ENCODE measurements at regions of chr7 and their contacts with region 1.

Region 1: DNA sequence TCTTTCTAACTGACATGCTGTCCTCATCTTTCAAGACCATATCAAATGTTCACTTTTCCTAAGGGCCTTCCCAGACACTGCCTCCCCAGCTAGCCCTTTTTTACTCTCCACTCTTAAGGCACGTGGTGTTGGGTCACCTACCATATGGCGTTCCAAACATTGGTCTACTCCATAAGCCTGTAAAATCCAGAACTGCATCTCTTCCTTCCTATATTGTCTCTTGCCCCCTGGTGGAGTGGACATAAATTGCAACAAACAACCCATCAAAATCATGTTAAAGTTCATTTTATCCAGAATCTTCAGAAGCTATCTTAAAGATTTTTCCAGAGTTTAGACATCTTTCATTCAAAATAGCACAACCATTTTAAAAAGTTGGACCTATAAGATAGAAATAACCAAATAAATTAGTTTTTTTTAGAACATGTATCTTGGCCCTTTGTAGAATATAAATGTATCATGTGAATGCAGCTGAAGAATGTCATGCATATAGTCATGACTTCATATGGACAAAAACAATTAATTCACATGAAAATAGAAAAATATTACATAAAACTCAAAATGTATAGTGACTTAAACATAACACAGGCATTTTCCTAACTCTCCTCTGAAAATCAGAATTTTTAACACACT is 180.6 kb upstream of the CHRM2 start:
- DNase-seq: peak; percentile 46
- H3K4me3 Mint-ChIP-seq: no peak overlapping the region
- H3K27ac Mint-ChIP-seq: no peak overlapping the region
- H3K4me1 Mint-ChIP-seq: peaks cover 5% of the 10 kb centered on the region
- H3K27me3 Mint-ChIP-seq: peaks cover 62% of the 10 kb centered on the region
- CTCF ChIP-seq: peak; percentile 67

Region 2: DNA sequence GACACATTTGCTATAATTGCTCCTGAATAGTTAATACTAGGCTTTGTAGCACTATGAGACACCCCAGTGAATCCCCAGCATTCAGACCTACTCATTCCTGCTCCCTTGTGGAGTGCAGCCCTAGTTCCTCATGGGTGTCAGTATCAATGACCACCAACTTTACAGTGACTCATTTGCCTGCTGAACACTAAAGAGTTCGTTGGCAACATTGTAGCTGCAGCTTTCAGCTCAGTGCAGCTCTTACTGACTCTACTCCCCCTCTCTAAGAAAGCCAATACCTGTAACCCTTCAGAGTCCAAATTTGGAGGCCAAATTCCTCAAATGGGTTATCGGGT is 583.6 kb before region 1 on chr7:
- CTCF ChIA-PET with region 1: no interaction called
- POLR2A ChIA-PET with region 1: no interaction called
- intact Hi-C with region 1: no loop called
- DNase-seq: no peak
- H3K4me3 Mint-ChIP-seq: no peak overlapping the region
- H3K27ac Mint-ChIP-seq: no peak overlapping the region
- H3K4me1 Mint-ChIP-seq: no peaks in the 10 kb centered on the region
- H3K27me3 Mint-ChIP-seq: no peaks in the 10 kb centered on the region
- CTCF ChIP-seq: no peak

Region 3: GRCh38 chr7:136114966-136115762 is 572.6 kb before region 1 on chr7:
- CTCF ChIA-PET with region 1: interaction called, 3 read pairs
- POLR2A ChIA-PET with region 1: no interaction called
- intact Hi-C with region 1: loop called (anchors 2 kb)
- DNase-seq: peak; percentile 51
- H3K4me3 Mint-ChIP-seq: no peak overlapping the region
- H3K27ac Mint-ChIP-seq: no peak overlapping the region
- H3K4me1 Mint-ChIP-seq: no peaks in the 10 kb centered on the region
- H3K27me3 Mint-ChIP-seq: peaks cover 40% of the 10 kb centered on the region
- CTCF ChIP-seq: peak; percentile 65

Region 4: GRCh38 chr7:136405931-136406777 is 281.7 kb before region 1 on chr7:
- CTCF ChIA-PET with region 1: interaction called, 21 read pairs
- POLR2A ChIA-PET with region 1: no interaction called
- intact Hi-C with region 1: no loop called
- DNase-seq: peak; percentile 61
- H3K4me3 Mint-ChIP-seq: no peak overlapping the region
- H3K27ac Mint-ChIP-seq: no peak overlapping the region
- H3K4me1 Mint-ChIP-seq: no peaks in the 10 kb centered on the region
- H3K27me3 Mint-ChIP-seq: peaks cover 62% of the 10 kb centered on the region
- CTCF ChIP-seq: peak; percentile 72

Region 5: DNA sequence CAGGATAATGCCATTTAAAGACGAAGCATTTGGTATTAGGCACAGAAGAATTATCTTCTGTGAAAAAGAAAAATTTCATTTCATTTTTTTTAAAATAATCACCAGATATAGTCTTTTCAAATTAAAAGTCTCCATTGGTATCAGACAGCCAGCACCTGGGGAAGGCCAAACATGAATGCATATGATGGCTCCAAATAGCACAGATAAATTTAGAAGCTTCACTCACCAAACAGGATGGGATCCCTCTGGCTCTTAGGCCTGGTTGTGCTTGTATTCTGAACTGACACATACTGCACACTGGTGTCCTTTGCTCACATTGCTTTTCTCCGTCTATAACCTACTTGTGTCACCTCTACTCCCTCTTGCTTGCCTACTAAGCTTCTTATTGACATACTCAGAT is 11.2 kb after region 1 on chr7:
- CTCF ChIA-PET with region 1: interaction called, 12 read pairs
- POLR2A ChIA-PET with region 1: no interaction called
- intact Hi-C with region 1: no loop called
- DNase-seq: no peak
- H3K4me3 Mint-ChIP-seq: no peak overlapping the region
- H3K27ac Mint-ChIP-seq: no peak overlapping the region
- H3K4me1 Mint-ChIP-seq: no peaks in the 10 kb centered on the region
- H3K27me3 Mint-ChIP-seq: peaks cover 33% of the 10 kb centered on the region
- CTCF ChIP-seq: no peak

Region 6: DNA sequence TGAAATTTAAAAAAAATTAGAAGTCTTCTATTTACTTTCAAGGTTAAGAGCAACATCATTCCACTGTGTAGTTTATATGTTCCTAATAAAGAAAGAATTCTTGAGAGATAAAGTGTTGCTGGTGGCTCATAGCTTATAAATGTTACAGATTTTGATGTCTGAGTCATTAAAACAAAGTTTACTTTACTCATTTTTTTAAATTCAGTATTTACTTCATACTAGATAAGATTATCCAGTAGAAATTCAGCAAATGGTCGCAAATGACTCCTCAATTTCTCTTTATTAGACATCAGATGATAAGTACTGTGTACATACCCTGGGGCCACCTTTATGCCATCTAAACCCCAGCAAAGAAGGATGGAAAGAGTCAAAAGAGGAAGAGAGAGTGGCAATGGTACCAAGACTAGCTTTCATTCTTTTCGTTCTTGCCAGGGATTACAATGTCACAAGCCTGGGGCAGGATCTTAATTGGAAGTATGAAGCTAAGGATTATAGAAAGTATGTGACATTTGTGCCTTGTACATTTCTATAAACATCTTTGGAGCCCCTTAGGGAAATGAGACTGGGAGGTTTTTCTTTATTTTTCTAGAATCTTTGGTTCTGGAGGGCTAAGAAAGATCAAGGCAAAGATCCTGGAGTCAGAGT is 386.7 kb after region 1 on chr7:
- CTCF ChIA-PET with region 1: no interaction called
- POLR2A ChIA-PET with region 1: no interaction called
- intact Hi-C with region 1: no loop called
- DNase-seq: no peak
- H3K4me3 Mint-ChIP-seq: no peak overlapping the region
- H3K27ac Mint-ChIP-seq: no peak overlapping the region
- H3K4me1 Mint-ChIP-seq: peaks cover 5% of the 10 kb centered on the region
- H3K27me3 Mint-ChIP-seq: no peaks in the 10 kb centered on the region
- CTCF ChIP-seq: no peak

Measured in MCF 10A (cell line).